Adrenal gland (tissue), 19 donors: ENCODE measurements at regions of chrX and their contacts with region 1.

Region 1: DNA sequence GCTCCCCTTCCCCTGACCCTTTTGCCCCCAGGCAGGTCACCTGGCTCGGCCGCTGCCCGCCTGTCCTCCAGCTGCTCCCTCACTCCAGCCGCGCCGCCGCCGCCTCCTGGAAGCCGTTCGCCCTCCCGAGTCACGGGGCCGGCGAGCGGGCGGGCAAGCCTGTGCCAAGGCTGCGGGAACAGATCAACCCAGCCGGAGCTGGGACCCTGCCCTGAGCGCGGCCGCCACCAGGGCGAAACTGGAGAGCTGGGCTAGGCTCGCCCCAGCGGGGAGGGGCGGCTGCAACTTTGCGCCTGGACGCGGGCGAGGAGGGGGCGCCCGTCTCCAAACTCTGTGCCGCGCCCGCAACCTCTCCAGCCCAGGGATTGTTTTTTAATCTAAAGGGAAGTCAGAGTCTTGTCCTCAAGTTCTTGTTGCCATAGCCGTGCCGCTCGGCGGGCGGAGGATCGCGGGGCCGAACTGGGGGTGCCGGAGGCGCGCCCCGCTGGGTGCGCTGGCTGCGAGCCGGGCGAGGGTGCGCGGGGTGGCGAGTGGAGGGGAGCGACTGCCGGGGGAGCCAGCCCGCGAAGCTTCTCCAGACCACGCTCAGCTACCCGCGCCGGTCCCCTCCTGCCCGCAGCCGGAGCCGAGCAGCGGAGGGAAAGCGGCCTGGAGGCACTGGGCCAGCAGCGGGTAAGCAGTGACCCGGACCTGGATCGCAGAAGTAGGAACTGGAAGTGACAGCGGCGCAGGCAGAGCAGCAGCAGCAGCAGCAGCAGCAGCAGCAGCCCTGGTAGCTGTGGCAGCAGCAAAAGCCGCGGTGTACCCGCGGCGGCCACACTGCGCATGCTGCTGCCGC is 13.4 kb downstream of the ARHGEF6 start:
- DNase-seq: peak; percentile 61 to 84 (median 76)
- H3K4me3 ChIP-seq: peak overlapping the region in 3 of 4 donors; percentile 15 to 73 (median 30)
- H3K27ac ChIP-seq: peak overlapping the region; percentile 65 to 94 (median 84)
- H3K4me1 ChIP-seq: peaks cover 3 to 18% of the 10 kb centered on the region in 2 donors
- H3K27me3 ChIP-seq: peaks cover 7% of the 10 kb centered on the region
- CTCF ChIP-seq: peak in 5 of 6 experiments; percentile 33 to 54 (median 40)
- POLR2A ChIP-seq: peak; percentile 18 to 57

Region 2: DNA sequence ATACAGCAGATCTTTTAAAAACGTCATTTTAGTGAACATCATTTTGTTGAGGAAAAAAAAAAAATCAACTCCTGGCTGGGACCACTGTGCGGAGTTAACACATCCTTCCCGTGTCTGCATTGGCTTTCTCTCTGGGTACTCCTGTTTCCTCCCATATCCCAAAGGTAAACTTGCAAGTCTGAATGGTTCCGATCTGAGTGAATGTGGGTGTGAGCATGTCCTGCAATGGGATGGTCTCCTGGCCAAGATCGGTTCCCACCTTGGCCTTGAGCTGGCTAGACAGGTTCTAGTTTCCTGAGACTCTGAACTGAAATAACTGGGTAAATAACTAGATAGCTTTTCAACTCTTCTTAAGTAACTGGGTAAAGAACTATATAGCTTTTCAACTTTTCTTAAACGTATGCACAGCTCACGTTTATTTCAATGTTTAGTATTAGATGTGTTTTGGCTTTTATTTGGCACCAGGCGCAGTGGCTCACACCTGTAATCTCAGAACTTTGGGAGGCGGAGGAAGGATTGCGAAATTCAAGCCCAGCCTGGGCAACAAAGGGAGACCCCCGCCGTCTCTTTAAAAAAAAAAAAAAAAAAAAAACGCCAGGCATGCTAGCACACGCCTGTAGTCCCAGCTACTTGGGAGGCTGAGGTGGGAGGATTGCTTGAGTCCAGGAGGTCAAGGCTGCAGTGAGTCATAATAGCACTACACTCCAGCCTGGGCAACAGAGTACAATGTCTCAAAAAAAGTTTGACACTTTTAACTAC is 99.2 kb after region 1 on chrX:
- intact Hi-C with region 1: loop called in 1 of 2 experiments (anchors 10 kb)
- DNase-seq: peak in 4 of 7 donors; percentile 22 to 49 (median 32)
- H3K4me3 ChIP-seq: no peak overlapping the region
- H3K27ac ChIP-seq: peak overlapping the region in 3 of 5 donors; percentile 26 to 45 (median 44)
- H3K4me1 ChIP-seq: no peaks in the 10 kb centered on the region
- H3K27me3 ChIP-seq: no peaks in the 10 kb centered on the region
- CTCF ChIP-seq: no peak
- POLR2A ChIP-seq: no peak

Region 3: GRCh38 chrX:136999024-136999423 is 231.7 kb after region 1 on chrX:
- intact Hi-C with region 1: no loop called
- DNase-seq: no peak
- H3K4me3 ChIP-seq: no peak overlapping the region
- H3K27ac ChIP-seq: no peak overlapping the region
- H3K4me1 ChIP-seq: no peaks in the 10 kb centered on the region
- H3K27me3 ChIP-seq: peaks cover 5% of the 10 kb centered on the region
- CTCF ChIP-seq: no peak
- POLR2A ChIP-seq: no peak